ENCODE measurements at regions of chrX and their contacts with region 1.

Region 1: DNA sequence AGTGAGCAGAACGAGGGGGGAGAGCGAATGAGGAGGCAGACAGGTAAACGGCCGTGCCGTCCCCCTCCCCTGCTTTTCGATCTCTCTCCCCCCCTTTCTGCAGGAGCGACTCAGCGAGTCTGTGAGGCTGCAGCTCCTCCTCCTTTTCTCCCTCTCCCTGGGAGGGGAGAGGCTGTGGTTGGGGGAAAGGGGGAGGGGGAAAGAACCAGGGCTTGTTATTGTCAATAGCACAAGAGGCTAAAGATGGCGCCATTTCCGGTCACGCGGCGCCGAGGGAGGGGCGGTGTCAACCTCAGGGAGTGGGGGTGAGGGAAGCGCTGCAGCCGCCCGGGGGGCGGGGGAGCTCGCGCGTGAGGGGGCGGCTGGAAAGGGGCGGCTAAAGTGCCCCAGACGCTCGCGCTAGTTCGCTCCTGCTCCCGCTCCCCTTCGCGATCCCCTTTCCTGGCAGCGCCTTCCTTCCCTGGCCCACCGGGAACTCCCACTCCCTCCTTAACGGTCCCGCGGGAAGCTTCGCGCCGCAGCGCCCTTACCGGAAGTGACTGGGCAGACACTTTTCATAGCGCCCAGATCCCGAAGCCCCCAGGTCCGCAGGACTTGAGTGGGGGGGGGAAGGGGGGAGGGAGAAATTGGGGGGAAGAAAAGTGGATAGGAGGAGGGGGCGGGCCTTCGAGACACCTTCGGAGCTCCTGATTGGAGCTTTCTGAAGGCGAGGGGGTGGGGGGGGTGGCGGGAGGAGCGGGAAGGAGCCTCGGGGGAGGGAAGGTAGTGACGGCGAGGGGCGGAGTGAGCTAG is at the start of gene CUL4B:
- DNase-seq: peak; percentile 91
- ATAC-seq: peak; percentile 81
- H3K4me3 ChIP-seq: peak within 1 kb of the TSS; percentile 74 to 84 (median 81)
- H3K27ac ChIP-seq: peak within 1 kb of the TSS; percentile 98
- H3K4me1 ChIP-seq: peaks cover 48% of the 10 kb centered on the region
- H3K27me3 ChIP-seq: no peaks in the 10 kb centered on the region
- CTCF ChIP-seq: no peak
- EP300 ChIP-seq: peak in 1 of 2 experiments; percentile 29; a peak in 1 of 4 replicates
- POLR2A ChIP-seq: peak; percentile 45 to 55; a peak in 3 of 4 replicates
- RAD21 ChIP-seq: no peak
- total RNA-seq, gene CUL4B: 28.5 and 50.0 TPM in 2 replicates

Region 2: GRCh38 chrX:120485638-120486520 is 75.2 kb before region 1 on chrX:
- CTCF ChIA-PET with region 1: no interaction called
- POLR2A ChIA-PET with region 1: interaction called, 20 read pairs
- in situ Hi-C with region 1: no loop called
- intact Hi-C with region 1: no loop called
- DNase-seq: peak; percentile 94
- ATAC-seq: peak; percentile 89
- H3K4me3 ChIP-seq: peak overlapping the region in 2 of 3 experiments; percentile 38 to 55; a peak in 5 of 6 replicates
- H3K27ac ChIP-seq: peak overlapping the region; percentile 91
- H3K4me1 ChIP-seq: peaks cover 29% of the 10 kb centered on the region
- H3K27me3 ChIP-seq: no peaks in the 10 kb centered on the region
- CTCF ChIP-seq: peak; percentile 69
- EP300 ChIP-seq: peak in 1 of 2 experiments; percentile 44; a peak in 1 of 4 replicates
- POLR2A ChIP-seq: peak; percentile 35 to 43; a peak in 2 of 4 replicates
- RAD21 ChIP-seq: 0 out of 2 replicates have a peak, but pooled peaks have one; percentile 14

Region 3: DNA sequence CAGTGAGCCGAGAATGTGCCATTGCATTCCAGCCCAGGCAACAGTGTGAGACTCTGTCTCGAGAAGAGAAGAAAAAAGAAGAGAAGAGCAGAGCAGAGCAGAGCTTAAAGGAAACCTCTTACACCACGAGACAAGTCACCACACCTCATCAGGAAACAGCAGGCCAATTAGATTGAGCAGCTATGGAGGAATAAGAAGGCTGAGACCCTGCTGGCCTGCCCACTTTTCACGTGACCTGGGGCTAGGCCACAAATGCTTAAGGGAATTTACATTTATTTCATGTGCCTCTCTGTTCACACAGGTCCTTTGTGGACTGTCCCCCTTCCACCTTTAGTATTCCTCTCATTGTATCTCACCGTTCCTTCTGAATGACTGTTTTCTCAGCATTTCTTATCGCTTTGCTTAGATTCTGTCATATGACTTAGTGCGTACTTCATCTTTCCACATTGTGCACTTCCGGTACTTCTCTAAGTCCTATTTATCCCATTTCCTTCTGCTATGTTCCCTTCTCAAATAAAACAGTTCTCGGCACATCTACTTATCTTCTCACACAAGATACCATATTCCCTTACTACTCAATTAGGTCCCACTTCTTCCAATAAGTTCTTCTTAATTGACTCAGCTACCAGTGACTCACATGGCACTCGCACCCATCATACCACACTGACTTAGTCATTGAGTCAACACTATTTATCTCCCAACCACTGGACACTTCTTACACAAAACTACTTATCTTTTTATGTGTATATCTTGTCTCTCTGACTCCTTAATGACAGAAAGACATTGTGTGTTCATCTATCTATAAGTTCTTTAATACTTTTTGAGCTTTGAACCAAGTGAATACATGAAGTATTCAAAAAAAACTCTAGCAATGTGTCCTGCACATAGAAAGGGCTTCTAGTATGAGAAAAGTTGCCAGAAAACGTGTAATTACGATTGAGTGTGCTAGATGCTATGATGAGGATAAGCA is 11.3 kb before region 1 on chrX:
- CTCF ChIA-PET with region 1: no interaction called
- POLR2A ChIA-PET with region 1: interaction called, 38 read pairs
- in situ Hi-C with region 1: no loop called
- intact Hi-C with region 1: no loop called
- DNase-seq: peak; percentile 76
- ATAC-seq: peak; percentile 77
- H3K4me3 ChIP-seq: no peak overlapping the region
- H3K27ac ChIP-seq: peak overlapping the region; percentile 50
- H3K4me1 ChIP-seq: peaks cover 32% of the 10 kb centered on the region
- H3K27me3 ChIP-seq: no peaks in the 10 kb centered on the region
- CTCF ChIP-seq: no peak
- EP300 ChIP-seq: no peak
- POLR2A ChIP-seq: no peak
- RAD21 ChIP-seq: no peak

Region 4: GRCh38 chrX:120629667-120630537 is 68.9 kb after region 1 on chrX and contains the start of gene C1GALT1C1:
- CTCF ChIA-PET with region 1: no interaction called
- POLR2A ChIA-PET with region 1: interaction called, 11 read pairs
- in situ Hi-C with region 1: loop called (anchors 10 kb)
- intact Hi-C with region 1: no loop called
- DNase-seq: peak; percentile 88
- ATAC-seq: peak; percentile 99
- H3K4me3 ChIP-seq: peak within 1 kb of the TSS; percentile 62 to 73 (median 68)
- H3K27ac ChIP-seq: peak within 1 kb of the TSS; percentile 84
- H3K4me1 ChIP-seq: peaks cover 10% of the 10 kb centered on the region
- H3K27me3 ChIP-seq: no peaks in the 10 kb centered on the region
- CTCF ChIP-seq: peak; percentile 40
- EP300 ChIP-seq: no peak
- POLR2A ChIP-seq: peak; percentile 53 to 63; a peak in 3 of 4 replicates
- RAD21 ChIP-seq: no peak
- total RNA-seq, gene C1GALT1C1: 18.2 and 31.9 TPM in 2 replicates

Region 5: DNA sequence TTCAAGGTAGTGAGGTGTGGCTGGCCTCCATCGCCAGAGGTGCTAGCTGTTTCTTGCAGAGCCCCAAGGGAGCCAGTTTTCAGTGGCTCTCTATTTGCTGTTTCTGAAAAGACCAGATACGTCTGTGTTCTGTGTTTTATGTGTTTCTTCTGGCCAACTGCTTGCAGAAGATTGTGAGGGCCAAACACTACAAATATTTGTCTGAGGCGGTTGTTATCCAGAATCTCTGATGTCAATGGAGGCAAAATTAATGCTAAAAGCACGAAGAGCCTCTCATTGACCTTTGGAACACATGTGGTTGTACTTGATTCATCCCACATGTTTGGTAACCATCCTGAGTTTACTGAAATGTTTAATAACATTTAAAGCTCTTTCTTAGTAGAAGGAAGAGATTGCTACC is 200.8 kb after region 1 on chrX:
- CTCF ChIA-PET with region 1: no interaction called
- POLR2A ChIA-PET with region 1: no interaction called
- in situ Hi-C with region 1: no loop called
- intact Hi-C with region 1: no loop called
- DNase-seq: peak; percentile 7
- ATAC-seq: no peak
- H3K4me3 ChIP-seq: no peak overlapping the region
- H3K27ac ChIP-seq: no peak overlapping the region
- H3K4me1 ChIP-seq: peaks cover 14% of the 10 kb centered on the region
- H3K27me3 ChIP-seq: no peaks in the 10 kb centered on the region
- CTCF ChIP-seq: no peak
- EP300 ChIP-seq: no peak
- POLR2A ChIP-seq: no peak
- RAD21 ChIP-seq: no peak